ENCODE measurements at regions of chr5 and their contacts with region 1.

Region 1: DNA sequence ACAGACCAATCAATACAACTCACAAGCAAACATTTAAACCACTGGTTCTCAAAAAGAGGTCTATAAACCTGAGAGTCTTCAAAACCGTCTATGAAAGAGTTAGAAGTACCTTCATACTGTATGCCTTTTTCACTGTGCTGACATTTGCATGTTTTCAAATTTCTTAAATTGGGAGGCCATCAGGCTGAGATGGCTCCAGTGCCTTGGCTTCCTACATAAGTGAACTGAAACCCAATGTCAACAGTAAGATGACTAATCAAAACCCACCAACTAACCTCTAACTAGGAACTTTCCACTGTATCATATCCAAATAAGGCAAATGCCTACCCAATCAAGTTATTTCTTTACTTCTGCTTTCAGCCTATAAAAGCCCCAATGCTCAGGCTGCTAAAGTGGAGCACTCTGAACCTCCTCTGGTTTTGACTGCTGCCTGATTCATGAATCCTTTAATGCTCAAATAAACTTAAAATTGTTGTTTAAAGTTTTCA is 35.1 kb downstream of the FAM13B start:
- DNase-seq: peak; percentile 41
- H3K4me3 Mint-ChIP-seq: no peak overlapping the region
- H3K27ac Mint-ChIP-seq: peak overlapping the region; percentile 74
- H3K4me1 Mint-ChIP-seq: peaks cover 52% of the 10 kb centered on the region
- H3K27me3 Mint-ChIP-seq: no peaks in the 10 kb centered on the region

Region 2: GRCh38 chr5:137580030-137580429 is 417.7 kb before region 1 on chr5:
- CTCF ChIA-PET with region 1: no interaction called
- POLR2A ChIA-PET with region 1: no interaction called
- intact Hi-C with region 1: no loop called
- DNase-seq: no peak
- H3K4me3 Mint-ChIP-seq: no peak overlapping the region
- H3K27ac Mint-ChIP-seq: no peak overlapping the region
- H3K4me1 Mint-ChIP-seq: no peaks in the 10 kb centered on the region
- H3K27me3 Mint-ChIP-seq: no peaks in the 10 kb centered on the region

Region 3: DNA sequence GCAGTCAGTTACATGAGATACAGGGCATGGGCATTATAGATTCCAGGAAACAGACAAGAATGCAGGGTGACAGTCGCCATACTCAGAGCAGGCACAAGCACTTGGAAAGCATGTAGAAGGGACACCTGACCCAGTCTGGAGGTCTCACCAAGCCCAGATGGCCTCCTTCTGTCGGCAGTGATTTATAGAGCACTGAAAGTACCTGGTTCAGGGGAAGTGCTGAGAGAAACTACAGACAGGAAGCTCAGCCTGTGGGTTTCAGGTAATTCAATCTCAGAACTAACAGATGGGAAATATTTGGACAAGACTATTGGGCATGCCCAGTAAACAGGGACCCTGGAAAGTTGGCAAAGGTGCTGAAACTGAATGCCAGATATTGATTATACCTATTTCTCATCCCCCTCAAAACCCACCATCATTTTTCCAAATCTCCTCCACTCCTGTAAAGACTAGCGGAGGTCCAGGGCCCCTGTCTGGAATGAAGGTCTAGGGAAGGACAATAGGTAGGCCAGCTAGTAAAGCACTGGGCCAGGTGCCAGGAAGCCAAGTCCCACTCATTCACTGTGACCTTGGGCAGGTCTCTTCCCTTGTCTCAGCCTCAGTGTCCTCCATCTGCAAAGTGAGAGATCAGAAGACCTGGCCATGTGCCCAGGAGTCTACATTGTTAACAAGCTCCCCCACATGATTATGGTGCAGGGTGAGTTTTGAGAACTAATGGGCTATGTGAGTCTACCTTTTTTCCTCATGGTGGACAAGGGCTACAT is 288.8 kb before region 1 on chr5:
- CTCF ChIA-PET with region 1: no interaction called
- POLR2A ChIA-PET with region 1: no interaction called
- intact Hi-C with region 1: no loop called
- DNase-seq: no peak
- H3K4me3 Mint-ChIP-seq: no peak overlapping the region
- H3K27ac Mint-ChIP-seq: no peak overlapping the region
- H3K4me1 Mint-ChIP-seq: no peaks in the 10 kb centered on the region
- H3K27me3 Mint-ChIP-seq: no peaks in the 10 kb centered on the region

Region 4: GRCh38 chr5:137938751-137939143 is 59.0 kb before region 1 on chr5:
- CTCF ChIA-PET with region 1: no interaction called
- POLR2A ChIA-PET with region 1: interaction called, 3 read pairs
- intact Hi-C with region 1: loop called (anchors 2 kb)
- DNase-seq: no peak
- H3K4me3 Mint-ChIP-seq: no peak overlapping the region
- H3K27ac Mint-ChIP-seq: peak overlapping the region; percentile 77
- H3K4me1 Mint-ChIP-seq: peaks cover 18% of the 10 kb centered on the region
- H3K27me3 Mint-ChIP-seq: no peaks in the 10 kb centered on the region